HepG2 (cell line): ENCODE measurements at regions of chr2 and their contacts with region 1.

Region 1: DNA sequence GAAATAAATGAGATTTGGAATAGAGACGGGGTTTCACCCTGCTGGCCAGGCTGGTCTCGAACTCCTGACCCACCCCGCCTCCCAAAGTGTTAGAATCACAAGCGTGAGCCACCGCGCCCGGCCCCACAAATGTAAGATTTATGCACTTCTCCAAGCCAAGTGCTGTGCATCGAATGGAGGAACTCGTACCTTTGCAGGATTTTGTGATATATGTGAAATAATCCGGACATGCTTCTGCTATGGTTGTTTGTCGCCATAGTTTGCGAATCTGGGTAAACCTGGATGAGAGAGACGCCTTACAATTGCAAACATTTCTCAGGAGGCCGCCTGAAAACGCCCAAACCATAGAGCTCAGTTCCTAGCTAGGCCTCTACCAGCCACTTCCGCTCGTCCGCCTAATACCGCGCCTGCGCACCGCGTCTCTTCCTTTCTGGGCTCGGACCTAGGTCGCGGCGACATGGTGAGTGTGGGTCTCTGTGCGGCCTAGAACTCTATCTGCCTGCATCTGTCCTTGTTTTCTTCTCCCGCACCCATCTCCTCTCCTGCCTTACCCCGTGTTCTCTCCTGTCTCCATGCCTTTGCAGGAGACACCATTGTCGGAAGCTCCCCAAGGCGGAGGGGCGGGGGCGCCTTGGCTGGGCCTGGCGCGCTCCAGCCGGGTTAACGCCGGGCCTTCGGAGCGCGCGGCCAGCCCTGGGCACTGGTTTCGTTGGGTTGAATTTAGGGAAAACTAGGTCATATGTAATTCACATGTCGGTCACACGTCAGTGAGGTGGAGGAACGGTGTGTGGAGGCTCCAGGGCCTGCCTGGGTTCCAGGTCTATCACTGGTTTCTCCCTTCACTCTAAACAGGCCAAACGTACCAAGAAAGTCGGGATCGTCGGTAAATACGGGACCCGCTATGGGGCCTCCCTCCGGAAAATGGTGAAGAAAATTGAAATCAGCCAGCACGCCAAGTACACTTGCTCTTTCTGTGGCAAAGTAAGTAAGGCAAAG is at the start of gene RPL37A:
- DNase-seq: peak; percentile 96
- ATAC-seq: peak; percentile 97
- H3K4me3 ChIP-seq: peak within 1 kb of the TSS; percentile 86 to 95 (median 92)
- H3K27ac ChIP-seq: peak within 1 kb of the TSS; percentile 89
- H3K4me1 ChIP-seq: peaks cover 56% of the 10 kb centered on the region
- H3K27me3 ChIP-seq: peaks cover 0 to 5% of the 10 kb centered on the region in 2 experiments; a peak in 1 of 5 replicates
- CTCF ChIP-seq: 0 out of 2 replicates have a peak, but pooled peaks have one; percentile 15
- EP300 ChIP-seq: peak in 1 of 2 experiments; percentile 61; a peak in 2 of 4 replicates
- POLR2A ChIP-seq: peak; percentile 100
- RAD21 ChIP-seq: 0 out of 2 replicates have a peak, but pooled peaks have one; percentile 15
- total RNA-seq, gene RPL37A: 6,902 and 7,071 TPM in 2 replicates

Region 2: GRCh38 chr2:215828517-215829184 is 670.1 kb before region 1 on chr2:
- CTCF ChIA-PET with region 1: no interaction called
- POLR2A ChIA-PET with region 1: no interaction called
- in situ Hi-C with region 1: no loop called
- intact Hi-C with region 1: no loop called
- DNase-seq: peak; percentile 81
- ATAC-seq: peak; percentile 82
- H3K4me3 ChIP-seq: no peak overlapping the region
- H3K27ac ChIP-seq: peak overlapping the region; percentile 67
- H3K4me1 ChIP-seq: peaks cover 82% of the 10 kb centered on the region
- H3K27me3 ChIP-seq: no peaks in the 10 kb centered on the region
- CTCF ChIP-seq: peak; percentile 76
- EP300 ChIP-seq: peak in 1 of 2 experiments; percentile 62; a peak in 2 of 4 replicates
- POLR2A ChIP-seq: no peak
- RAD21 ChIP-seq: peak; percentile 69

Region 3: DNA sequence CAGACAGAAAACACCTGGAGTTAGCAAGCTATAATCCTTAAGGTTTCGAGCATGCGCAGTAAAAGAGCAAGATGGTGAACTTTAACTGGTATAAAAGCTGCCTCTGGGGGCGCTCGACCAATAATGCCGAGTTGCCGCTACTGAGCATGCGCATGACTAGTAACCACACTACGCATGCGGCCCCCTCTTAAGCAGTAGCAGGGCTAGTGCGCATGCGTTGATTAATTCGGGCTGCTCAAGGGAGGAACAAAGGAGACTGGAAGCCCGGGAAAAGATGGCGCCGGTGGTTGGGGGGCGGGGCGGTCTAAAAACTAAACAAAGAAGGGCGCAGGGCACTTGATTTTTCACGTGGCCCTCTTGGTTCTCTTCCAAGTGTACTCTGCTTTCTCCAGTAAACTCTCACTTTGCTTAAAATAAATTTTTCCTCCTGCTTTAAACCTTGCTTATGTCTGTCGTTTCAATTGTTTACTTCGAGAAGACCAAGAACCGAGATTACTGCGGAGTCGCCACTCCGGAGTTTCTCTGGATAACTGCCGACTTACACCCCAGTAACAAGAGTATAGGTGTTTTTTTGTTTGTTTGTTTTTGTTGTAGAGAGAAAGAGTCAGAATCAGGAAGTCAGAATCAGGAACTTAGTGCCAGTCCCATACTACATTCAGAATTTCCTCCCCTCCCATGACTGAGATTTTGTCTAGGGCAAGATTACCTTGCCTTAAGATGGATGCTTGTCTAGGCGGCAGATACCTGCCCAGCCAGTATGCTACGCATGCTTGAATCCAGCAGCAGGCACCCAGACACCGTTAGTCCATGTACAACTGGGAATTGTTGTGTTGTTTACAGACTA is 383.8 kb before region 1 on chr2:
- CTCF ChIA-PET with region 1: no interaction called
- POLR2A ChIA-PET with region 1: interaction called, 5 read pairs
- in situ Hi-C with region 1: no loop called
- intact Hi-C with region 1: loop called (anchors 5 kb)
- DNase-seq: peak; percentile 100
- ATAC-seq: peak; percentile 90
- H3K4me3 ChIP-seq: peak overlapping the region; percentile 55 to 79 (median 69)
- H3K27ac ChIP-seq: peak overlapping the region; percentile 92
- H3K4me1 ChIP-seq: peaks cover 68% of the 10 kb centered on the region
- H3K27me3 ChIP-seq: no peaks in the 10 kb centered on the region; a peak in 1 of 5 replicates
- CTCF ChIP-seq: peak; percentile 94
- EP300 ChIP-seq: peak in 1 of 2 experiments; percentile 43; a peak in 1 of 4 replicates
- POLR2A ChIP-seq: peak; percentile 57 to 58
- RAD21 ChIP-seq: peak; percentile 12; the same call in 1 of the 2 replicates

Region 4: GRCh38 chr2:216412022-216412999 is 86.4 kb before region 1 on chr2 and contains the start of gene SMARCAL1:
- CTCF ChIA-PET with region 1: no interaction called
- POLR2A ChIA-PET with region 1: interaction called, 18 read pairs
- in situ Hi-C with region 1: no loop called
- intact Hi-C with region 1: loop called (anchors 1 kb)
- DNase-seq: peak; percentile 98
- ATAC-seq: peak; percentile 93
- H3K4me3 ChIP-seq: peak within 1 kb of the TSS; percentile 91 to 99 (median 94)
- H3K27ac ChIP-seq: peak within 1 kb of the TSS; percentile 86
- H3K4me1 ChIP-seq: peaks cover 39% of the 10 kb centered on the region
- H3K27me3 ChIP-seq: peaks cover 0 to 10% of the 10 kb centered on the region in 2 experiments; a peak in 1 of 5 replicates
- CTCF ChIP-seq: peak; percentile 23; the same call in 1 of the 2 replicates
- EP300 ChIP-seq: 0 out of 4 replicates have a peak, but pooled peaks of 1 of the 2 experiments have one; percentile 9
- POLR2A ChIP-seq: peak; percentile 66 to 75
- RAD21 ChIP-seq: 0 out of 2 replicates have a peak, but pooled peaks have one; percentile 33
- total RNA-seq, gene SMARCAL1: 12.7 and 19.8 TPM in 2 replicates

Region 5: DNA sequence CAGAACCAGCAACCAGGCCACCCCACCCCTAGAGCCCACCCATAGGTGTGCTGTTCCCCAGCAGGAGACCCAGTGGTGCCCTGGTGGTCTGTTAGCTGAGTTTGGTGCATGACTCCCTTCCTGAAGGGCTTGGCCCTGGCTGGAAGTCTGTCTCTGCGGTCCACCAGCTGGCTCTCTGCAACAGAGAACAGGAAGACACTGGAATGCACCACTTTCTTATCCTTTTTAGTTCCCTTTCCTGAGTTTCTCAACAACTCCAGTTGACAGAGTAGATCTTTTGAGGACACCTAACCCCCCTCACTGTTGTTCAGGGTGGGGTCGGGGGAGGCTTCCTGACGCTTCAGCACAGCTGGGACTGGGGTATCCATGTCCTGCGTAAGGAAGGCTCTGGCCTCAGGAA is 12.0 kb before region 1 on chr2:
- CTCF ChIA-PET with region 1: no interaction called
- POLR2A ChIA-PET with region 1: interaction called, 21 read pairs
- in situ Hi-C with region 1: no loop called
- intact Hi-C with region 1: no loop called
- DNase-seq: no peak
- ATAC-seq: peak; percentile 46; the same call in 2 of the 3 replicates
- H3K4me3 ChIP-seq: no peak overlapping the region
- H3K27ac ChIP-seq: no peak overlapping the region
- H3K4me1 ChIP-seq: peaks cover 9% of the 10 kb centered on the region
- H3K27me3 ChIP-seq: no peaks in the 10 kb centered on the region
- CTCF ChIP-seq: no peak
- EP300 ChIP-seq: no peak
- POLR2A ChIP-seq: no peak
- RAD21 ChIP-seq: no peak

Region 6: GRCh38 chr2:216519154-216519762 is 20.5 kb after region 1 on chr2:
- CTCF ChIA-PET with region 1: no interaction called
- POLR2A ChIA-PET with region 1: interaction called, 10 read pairs
- in situ Hi-C with region 1: no loop called
- intact Hi-C with region 1: no loop called
- DNase-seq: peak; percentile 82
- ATAC-seq: peak; percentile 84
- H3K4me3 ChIP-seq: no peak overlapping the region
- H3K27ac ChIP-seq: no peak overlapping the region
- H3K4me1 ChIP-seq: peaks cover 28% of the 10 kb centered on the region
- H3K27me3 ChIP-seq: no peaks in the 10 kb centered on the region
- CTCF ChIP-seq: peak; percentile 92
- EP300 ChIP-seq: no peak
- POLR2A ChIP-seq: no peak
- RAD21 ChIP-seq: peak; percentile 93

Region 7: DNA sequence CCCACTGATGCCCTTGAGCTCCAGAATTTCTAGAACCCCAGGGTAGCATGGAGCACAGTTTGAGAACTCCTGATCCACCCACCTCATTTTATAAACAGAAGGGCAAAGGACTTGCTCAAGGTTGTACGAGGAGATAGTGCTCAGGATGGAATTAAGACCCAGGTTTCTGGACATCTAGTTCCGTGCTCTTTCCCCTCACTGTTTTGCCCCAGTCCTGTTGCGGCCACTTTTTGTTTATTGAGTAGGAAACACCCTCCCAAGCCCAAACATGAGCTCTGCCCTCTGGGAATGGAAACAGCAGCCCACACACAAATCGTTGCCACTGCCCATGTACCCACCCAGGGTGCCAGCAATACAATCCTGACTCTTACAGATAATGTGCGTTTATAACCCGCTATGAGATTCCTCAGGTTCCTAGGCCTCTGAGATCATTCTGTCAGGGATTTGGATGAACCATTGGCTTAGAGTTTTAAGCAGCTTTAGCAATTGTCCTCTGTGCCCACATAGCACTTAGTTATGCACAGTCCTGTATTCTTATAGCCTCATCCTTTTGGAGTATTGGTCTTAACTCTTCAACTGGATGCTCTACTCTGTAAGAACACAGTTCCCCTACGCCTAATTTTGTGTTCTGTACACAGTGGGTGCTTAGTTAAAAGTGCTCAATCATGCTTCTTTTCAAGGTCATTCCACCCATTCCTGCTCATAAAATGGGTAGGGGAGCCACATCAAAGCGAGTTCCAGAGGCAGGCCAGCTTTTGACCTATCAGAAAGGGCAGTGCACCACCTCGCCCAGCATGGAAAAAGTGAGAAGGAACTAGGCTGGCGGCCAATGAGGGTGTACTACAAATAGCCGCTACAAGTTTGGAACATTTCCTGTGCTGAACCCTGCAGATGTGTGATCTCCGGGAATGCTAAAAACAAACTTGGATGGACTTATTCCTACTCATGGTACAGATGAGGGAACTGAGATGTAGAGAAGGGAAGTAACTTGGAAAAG is 74.2 kb after region 1 on chr2:
- CTCF ChIA-PET with region 1: no interaction called
- POLR2A ChIA-PET with region 1: interaction called, 10 read pairs
- in situ Hi-C with region 1: no loop called
- intact Hi-C with region 1: no loop called
- DNase-seq: peak; percentile 78
- ATAC-seq: peak; percentile 66
- H3K4me3 ChIP-seq: peak overlapping the region; percentile 4 to 58 (median 7); a peak in 4 of 6 replicates
- H3K27ac ChIP-seq: peak overlapping the region; percentile 74
- H3K4me1 ChIP-seq: peaks cover 79% of the 10 kb centered on the region
- H3K27me3 ChIP-seq: no peaks in the 10 kb centered on the region; a peak in 1 of 5 replicates
- CTCF ChIP-seq: no peak
- EP300 ChIP-seq: 0 out of 4 replicates have a peak, but pooled peaks of 1 of the 2 experiments have one; percentile 62
- POLR2A ChIP-seq: peak in 1 of 2 experiments; percentile 36; a peak in 1 of 4 replicates
- RAD21 ChIP-seq: no peak

Region 8: DNA sequence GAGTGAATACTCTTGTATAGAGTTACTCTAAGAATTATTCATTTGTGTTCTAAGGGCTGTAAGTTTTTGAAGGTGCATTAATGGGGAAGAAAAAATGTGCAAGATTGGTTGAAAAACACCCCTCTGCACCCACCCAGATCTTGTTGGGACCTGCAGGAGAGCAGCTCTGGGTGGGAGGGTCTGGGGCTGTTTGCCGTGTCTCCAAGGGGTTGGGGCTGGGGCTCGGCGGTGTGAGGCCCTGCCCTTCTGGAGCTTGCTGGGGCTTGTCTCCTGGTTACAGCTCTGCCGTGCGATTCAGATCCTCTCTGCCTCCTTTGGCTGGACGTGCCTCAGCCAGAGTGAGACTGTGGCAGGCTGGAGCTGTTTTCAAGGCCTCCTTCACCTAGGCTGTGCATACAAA is 160.6 kb after region 1 on chr2:
- CTCF ChIA-PET with region 1: no interaction called
- POLR2A ChIA-PET with region 1: interaction called, 10 read pairs
- in situ Hi-C with region 1: no loop called
- intact Hi-C with region 1: no loop called
- DNase-seq: no peak
- ATAC-seq: peak; percentile 51
- H3K4me3 ChIP-seq: no peak overlapping the region; a peak in 1 of 6 replicates
- H3K27ac ChIP-seq: no peak overlapping the region
- H3K4me1 ChIP-seq: peaks cover 37% of the 10 kb centered on the region
- H3K27me3 ChIP-seq: peaks cover 0 to 26% of the 10 kb centered on the region in 2 experiments; a peak in 3 of 5 replicates
- CTCF ChIP-seq: no peak
- EP300 ChIP-seq: no peak
- POLR2A ChIP-seq: no peak
- RAD21 ChIP-seq: no peak